ENCODE measurements at regions of chr18 and their contacts with region 1.

Region 1: GRCh38 chr18:63518178-63519012 is 23.8 kb upstream of the SERPINB12 start:
- DNase-seq: peak; percentile 77
- ATAC-seq: peak; percentile 61
- H3K4me3 ChIP-seq: no peak overlapping the region
- H3K4me3 Mint-ChIP-seq: no peak overlapping the region
- H3K27ac ChIP-seq: no peak overlapping the region
- H3K27ac Mint-ChIP-seq: no peak overlapping the region
- H3K4me1 ChIP-seq: peaks cover 0 to 4% of the 10 kb centered on the region in 2 donors
- H3K4me1 Mint-ChIP-seq: no peaks in the 10 kb centered on the region
- H3K27me3 ChIP-seq: no peaks in the 10 kb centered on the region
- H3K27me3 Mint-ChIP-seq: peaks cover 26% of the 10 kb centered on the region
- CTCF ChIP-seq: peak; percentile 86

Region 2: DNA sequence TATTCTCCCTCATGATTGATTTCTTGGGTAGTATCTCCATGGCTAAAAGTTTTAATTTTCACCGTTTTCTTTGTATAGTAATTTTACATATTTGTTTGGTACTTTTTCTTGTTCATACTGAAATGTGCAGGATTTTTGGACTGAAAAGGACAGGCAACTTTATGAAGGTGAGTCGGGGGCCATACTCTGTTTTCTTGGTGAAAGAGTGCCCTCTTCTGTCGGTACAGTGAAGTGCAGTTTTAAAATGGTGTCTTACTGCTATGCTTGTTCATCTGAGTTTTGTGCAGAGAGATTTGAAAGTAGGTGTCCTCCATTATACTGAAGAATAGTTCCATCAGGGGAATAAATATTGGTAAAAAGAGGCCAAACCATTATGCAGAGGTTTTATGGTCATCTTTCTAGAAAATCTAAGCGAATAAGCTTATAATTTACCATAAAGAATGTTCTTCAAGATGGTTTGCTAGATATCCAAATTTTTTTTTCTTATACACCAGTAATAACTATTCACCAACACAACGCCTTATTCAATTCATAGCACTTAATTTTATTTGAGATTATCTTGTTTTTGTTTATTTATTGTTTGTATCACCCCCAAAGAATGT is 60.1 kb after region 1 on chr18:
- CTCF ChIA-PET with region 1: interaction called, 7 read pairs
- POLR2A ChIA-PET with region 1: no interaction called
- intact Hi-C with region 1: loop called (anchors 1 kb)
- DNase-seq: peak; percentile 12
- ATAC-seq: no peak
- H3K4me3 ChIP-seq: no peak overlapping the region
- H3K4me3 Mint-ChIP-seq: no peak overlapping the region
- H3K27ac ChIP-seq: no peak overlapping the region
- H3K27ac Mint-ChIP-seq: no peak overlapping the region
- H3K4me1 ChIP-seq: no peaks in the 10 kb centered on the region
- H3K4me1 Mint-ChIP-seq: no peaks in the 10 kb centered on the region
- H3K27me3 ChIP-seq: peaks cover 0 to 4% (median 0%) of the 10 kb centered on the region in 4 experiments
- H3K27me3 Mint-ChIP-seq: peaks cover 11% of the 10 kb centered on the region
- CTCF ChIP-seq: peak; percentile 32

Region 3: DNA sequence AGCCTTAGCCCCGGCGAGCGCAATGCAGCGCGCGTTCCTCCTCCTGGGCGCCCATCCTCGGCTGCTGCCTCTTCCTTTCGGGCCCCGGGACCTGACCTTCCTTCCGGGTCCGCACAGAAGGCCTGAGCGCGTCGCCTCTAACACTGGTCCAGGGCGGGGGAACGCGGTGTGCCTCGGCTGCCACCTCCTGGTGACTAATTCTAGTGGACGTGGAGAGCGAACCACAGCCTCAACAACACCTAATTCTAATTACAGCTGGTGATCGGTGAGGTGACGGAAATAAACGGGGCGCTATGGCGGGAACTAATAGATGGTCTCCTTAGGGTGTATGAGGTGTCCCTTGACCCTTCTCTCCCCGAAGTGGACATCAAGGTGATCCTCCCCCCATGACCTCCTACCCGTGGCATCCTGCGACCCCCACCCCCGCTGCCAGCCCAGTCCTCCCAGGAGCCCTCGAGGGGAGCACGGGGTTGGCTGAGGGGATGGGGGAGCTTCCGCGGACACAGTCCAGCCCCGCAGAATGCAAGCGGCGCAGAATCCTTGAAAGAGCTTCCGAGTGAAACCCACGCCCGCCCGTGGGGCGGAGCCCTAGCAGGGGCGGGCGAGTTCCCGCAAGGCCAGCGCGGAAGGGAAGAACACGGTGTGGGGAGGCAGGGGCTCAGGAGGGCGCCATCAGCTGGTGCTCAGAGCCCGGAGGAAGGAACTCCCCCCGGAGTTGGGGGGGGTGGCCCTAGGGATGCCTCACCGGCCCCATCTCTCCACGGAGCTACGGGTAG is 417.9 kb after region 1 on chr18:
- CTCF ChIA-PET with region 1: interaction called, 64 read pairs
- POLR2A ChIA-PET with region 1: no interaction called
- intact Hi-C with region 1: loop called (anchors 1 kb)
- DNase-seq: peak; percentile 77
- ATAC-seq: peak; percentile 89
- H3K4me3 ChIP-seq: peak overlapping the region; percentile 32 to 73 (median 65)
- H3K4me3 Mint-ChIP-seq: no peak overlapping the region
- H3K27ac ChIP-seq: peak overlapping the region in 1 of 2 donors; percentile 7
- H3K27ac Mint-ChIP-seq: no peak overlapping the region
- H3K4me1 ChIP-seq: peaks cover 11 to 14% of the 10 kb centered on the region in 2 donors
- H3K4me1 Mint-ChIP-seq: peaks cover 5% of the 10 kb centered on the region
- H3K27me3 ChIP-seq: peaks cover 0 to 17% (median 4%) of the 10 kb centered on the region in 4 experiments
- H3K27me3 Mint-ChIP-seq: peaks cover 4% of the 10 kb centered on the region
- CTCF ChIP-seq: peak; percentile 69

Region 4: DNA sequence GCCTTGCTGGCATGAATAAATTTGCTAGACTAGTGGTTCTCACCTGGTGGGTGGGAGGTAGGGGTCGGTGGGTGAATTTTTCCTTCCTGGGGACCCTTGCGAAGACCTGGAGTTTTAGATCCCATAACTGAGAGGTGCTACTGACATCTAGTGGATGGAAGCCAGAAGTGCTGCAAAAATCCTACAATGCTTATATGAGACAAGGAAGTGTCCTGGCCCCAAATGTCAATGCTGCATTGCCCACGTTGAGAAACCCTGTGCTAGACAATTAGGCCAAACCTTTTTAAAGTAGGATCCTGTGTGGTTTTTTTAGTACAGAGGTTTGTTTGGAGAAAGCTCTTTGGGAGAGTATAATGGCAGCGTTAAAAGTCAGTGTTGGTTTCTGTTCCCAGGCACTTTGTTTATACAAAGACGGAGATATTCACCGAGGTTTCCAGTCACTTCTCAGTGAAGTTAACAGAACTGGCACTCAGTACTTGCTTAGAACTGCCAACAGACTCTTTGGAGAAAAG is 461.1 kb after region 1 on chr18:
- CTCF ChIA-PET with region 1: interaction called, 17 read pairs
- POLR2A ChIA-PET with region 1: no interaction called
- intact Hi-C with region 1: loop called (anchors 1 kb)
- DNase-seq: peak; percentile 72
- ATAC-seq: peak; percentile 80
- H3K4me3 ChIP-seq: no peak overlapping the region
- H3K4me3 Mint-ChIP-seq: no peak overlapping the region
- H3K27ac ChIP-seq: no peak overlapping the region
- H3K27ac Mint-ChIP-seq: peak overlapping the region; percentile 1
- H3K4me1 ChIP-seq: peaks cover 15 to 21% of the 10 kb centered on the region in 2 donors
- H3K4me1 Mint-ChIP-seq: peaks cover 31% of the 10 kb centered on the region
- H3K27me3 ChIP-seq: no peaks in the 10 kb centered on the region
- H3K27me3 Mint-ChIP-seq: no peaks in the 10 kb centered on the region
- CTCF ChIP-seq: peak; percentile 91

Region 5: GRCh38 chr18:64002581-64002980 is 484.2 kb after region 1 on chr18:
- CTCF ChIA-PET with region 1: no interaction called
- POLR2A ChIA-PET with region 1: no interaction called
- intact Hi-C with region 1: no loop called
- DNase-seq: no peak
- ATAC-seq: no peak
- H3K4me3 ChIP-seq: no peak overlapping the region
- H3K4me3 Mint-ChIP-seq: no peak overlapping the region
- H3K27ac ChIP-seq: no peak overlapping the region
- H3K27ac Mint-ChIP-seq: no peak overlapping the region
- H3K4me1 ChIP-seq: no peaks in the 10 kb centered on the region
- H3K4me1 Mint-ChIP-seq: no peaks in the 10 kb centered on the region
- H3K27me3 ChIP-seq: peaks cover 0 to 3% (median 0%) of the 10 kb centered on the region in 4 experiments
- H3K27me3 Mint-ChIP-seq: peaks cover 9% of the 10 kb centered on the region
- CTCF ChIP-seq: no peak

Region 6: GRCh38 chr18:64037812-64038414 is 519.5 kb after region 1 on chr18:
- CTCF ChIA-PET with region 1: interaction called, 13 read pairs
- POLR2A ChIA-PET with region 1: no interaction called
- intact Hi-C with region 1: no loop called
- DNase-seq: peak; percentile 56
- ATAC-seq: peak; percentile 43
- H3K4me3 ChIP-seq: no peak overlapping the region
- H3K4me3 Mint-ChIP-seq: no peak overlapping the region
- H3K27ac ChIP-seq: no peak overlapping the region
- H3K27ac Mint-ChIP-seq: no peak overlapping the region
- H3K4me1 ChIP-seq: no peaks in the 10 kb centered on the region
- H3K4me1 Mint-ChIP-seq: no peaks in the 10 kb centered on the region
- H3K27me3 ChIP-seq: peaks cover 0 to 3% (median 0%) of the 10 kb centered on the region in 4 experiments
- H3K27me3 Mint-ChIP-seq: no peaks in the 10 kb centered on the region
- CTCF ChIP-seq: peak; percentile 78

Measured in B cell (primary cell).